ENCODE measurements at regions of chr16 and their contacts with region 1.

Region 1: DNA sequence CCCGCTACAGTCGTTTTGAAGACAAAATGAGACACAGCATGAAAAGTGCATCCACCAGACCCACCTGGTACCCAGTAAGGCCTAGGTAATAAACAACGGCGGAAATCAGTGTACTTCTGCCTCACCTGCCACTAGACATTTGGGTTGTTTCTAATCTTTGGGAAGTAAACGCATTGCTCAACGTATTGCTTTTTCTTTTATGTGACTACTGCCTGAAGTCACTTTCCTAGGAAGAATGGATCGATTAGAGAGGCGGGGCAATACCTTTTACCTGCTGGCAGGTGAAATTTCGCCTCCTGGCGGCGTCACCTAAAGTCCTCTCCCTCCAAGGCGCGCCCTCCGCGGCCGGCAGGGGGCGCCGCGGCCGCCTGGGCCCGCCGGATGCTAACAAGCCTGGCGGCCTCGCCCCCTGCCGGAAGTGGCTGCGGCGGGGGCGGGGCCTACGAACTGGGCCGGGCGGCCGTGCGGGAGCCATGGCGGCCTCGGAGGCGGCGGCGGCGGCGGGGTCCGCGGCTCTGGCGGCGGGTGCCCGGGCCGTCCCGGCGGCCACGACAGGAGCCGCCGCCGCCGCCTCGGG is at the start of gene ATMIN:
- DNase-seq: no peak
- H3K4me3 ChIP-seq: peak within 1 kb of the TSS; percentile 74
- CTCF ChIP-seq: peak; percentile 81

Region 2: DNA sequence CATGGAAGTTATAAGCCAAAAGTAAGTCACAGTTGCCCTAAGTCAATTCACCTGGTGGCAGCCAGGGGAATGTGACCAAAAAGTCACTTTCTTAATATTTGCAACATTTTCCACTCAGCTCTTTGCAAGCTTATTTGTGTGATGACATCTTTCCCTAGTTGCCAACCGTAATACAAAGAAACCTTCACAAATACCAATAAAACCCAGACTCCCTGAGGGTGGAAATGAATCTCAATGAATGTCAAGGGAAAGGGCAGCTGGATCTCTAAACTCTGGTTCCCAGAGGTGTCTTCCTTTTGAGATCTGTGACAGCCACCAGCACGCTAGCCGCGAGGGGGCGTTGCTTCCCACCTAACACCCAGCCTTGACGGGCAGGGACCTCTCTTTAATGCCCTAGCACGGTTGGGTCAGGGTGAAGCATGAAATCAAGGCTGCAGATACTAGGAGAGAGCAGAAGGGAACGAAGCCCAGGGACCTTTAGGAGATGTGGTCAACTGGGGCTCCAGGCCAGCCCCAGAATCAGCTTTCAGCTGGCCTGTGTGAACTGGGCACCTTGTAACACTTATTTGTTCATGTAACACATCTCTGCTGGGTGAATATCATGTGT is 111.0 kb before region 1 on chr16:
- CTCF ChIA-PET with region 1: interaction called, 13 read pairs
- POLR2A ChIA-PET with region 1: no interaction called
- DNase-seq: no peak
- H3K4me3 ChIP-seq: no peak overlapping the region
- CTCF ChIP-seq: peak; percentile 90

Region 3: DNA sequence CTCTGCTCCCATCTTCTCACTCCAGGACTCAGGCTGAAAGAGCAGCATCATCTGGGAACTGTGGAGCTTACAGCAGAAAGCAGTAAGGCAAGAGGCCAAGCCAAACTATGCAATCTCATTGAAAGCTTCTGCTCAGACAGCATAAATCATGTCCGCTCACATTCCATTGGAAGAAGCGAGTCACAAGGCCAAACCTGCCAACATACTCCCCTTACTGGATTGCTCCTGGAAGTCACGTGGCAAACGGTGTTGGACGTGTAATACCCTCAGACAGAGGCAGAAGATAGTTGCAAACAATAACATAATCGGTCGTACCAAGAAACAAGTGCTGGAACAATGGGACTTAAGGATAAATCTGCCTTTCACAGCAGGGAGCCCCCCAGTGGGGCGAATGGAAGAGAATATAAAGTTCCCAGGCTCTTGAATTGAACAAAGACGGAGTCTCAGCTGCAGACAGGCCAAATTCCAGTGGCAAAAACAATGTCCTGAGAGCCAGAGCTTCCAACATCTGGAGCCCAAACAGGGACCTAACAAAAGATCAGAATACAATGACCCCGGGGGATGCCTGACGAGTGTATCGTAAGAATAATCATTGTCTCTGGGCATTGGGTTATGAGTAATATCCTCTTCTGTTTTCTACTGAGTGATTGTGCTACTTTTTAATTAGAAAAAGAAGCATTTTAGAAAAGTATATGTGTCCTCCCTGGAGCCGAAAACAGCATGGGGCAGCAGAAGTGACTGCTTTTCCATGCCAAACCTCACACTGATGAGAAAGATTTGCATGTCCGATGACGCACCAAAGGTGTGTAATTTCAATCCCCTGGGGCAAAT is 97.2 kb before region 1 on chr16:
- CTCF ChIA-PET with region 1: interaction called, 12 read pairs
- POLR2A ChIA-PET with region 1: no interaction called
- DNase-seq: peak; percentile 99
- H3K4me3 ChIP-seq: peak overlapping the region; percentile 31
- CTCF ChIP-seq: no peak

Region 4: GRCh38 chr16:81018496-81018895 is 17.0 kb before region 1 on chr16:
- CTCF ChIA-PET with region 1: interaction called, 67 read pairs
- POLR2A ChIA-PET with region 1: no interaction called
- DNase-seq: no peak
- H3K4me3 ChIP-seq: no peak overlapping the region
- CTCF ChIP-seq: no peak

Region 5: DNA sequence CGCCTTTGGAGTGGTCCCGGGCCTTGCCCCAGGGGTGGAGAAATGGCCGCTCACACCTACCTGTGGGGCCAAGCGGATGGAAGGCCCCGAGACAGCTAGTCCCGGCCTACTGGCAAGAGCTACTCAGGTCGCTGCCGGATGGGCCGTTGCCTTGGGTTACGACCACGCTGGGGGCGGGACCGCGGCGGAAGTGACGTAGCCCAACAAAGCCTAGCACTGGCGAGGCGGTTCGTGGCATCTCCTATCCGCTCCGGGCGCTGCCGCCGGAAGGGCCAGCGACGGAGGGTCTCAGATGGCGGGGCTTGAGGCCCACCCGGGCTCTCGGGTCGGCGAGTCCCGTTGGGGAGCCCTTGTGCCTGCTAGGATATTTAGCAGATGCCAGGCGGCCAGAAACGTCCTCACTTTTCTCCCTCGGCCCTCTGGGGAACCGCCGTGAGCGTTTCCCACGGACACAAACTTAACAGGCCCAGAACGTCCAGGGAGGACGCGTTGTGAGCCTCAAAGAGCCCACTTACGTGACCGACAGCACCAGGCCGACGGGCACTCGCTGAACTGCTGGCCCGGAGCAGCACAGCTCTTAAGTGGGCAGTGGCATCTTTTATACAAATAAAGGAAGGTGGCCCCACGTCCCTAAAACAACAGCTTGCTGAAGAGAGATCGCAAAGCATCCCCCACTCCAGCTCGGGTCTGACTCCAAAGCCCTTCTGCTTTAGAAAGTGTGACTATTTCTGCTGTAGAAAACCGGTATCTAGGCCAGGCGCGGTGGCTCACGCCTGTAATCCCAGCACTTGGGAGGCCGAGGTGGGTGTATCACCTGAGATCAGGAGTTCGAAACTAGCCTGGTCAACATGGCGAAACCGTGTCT is 41.8 kb after region 1 on chr16 and contains the start of gene C16orf46:
- CTCF ChIA-PET with region 1: interaction called, 44 read pairs
- POLR2A ChIA-PET with region 1: interaction called, 4 read pairs
- DNase-seq: peak; percentile 72
- H3K4me3 ChIP-seq: peak within 1 kb of the TSS; percentile 85
- CTCF ChIP-seq: no peak

Region 6: GRCh38 chr16:81127051-81127450 is 91.6 kb after region 1 on chr16:
- CTCF ChIA-PET with region 1: no interaction called
- POLR2A ChIA-PET with region 1: no interaction called
- DNase-seq: peak; percentile 24
- H3K4me3 ChIP-seq: no peak overlapping the region
- CTCF ChIP-seq: no peak